HepG2 (cell line): ENCODE measurements at regions of chr12 and their contacts with region 1.

Region 1: DNA sequence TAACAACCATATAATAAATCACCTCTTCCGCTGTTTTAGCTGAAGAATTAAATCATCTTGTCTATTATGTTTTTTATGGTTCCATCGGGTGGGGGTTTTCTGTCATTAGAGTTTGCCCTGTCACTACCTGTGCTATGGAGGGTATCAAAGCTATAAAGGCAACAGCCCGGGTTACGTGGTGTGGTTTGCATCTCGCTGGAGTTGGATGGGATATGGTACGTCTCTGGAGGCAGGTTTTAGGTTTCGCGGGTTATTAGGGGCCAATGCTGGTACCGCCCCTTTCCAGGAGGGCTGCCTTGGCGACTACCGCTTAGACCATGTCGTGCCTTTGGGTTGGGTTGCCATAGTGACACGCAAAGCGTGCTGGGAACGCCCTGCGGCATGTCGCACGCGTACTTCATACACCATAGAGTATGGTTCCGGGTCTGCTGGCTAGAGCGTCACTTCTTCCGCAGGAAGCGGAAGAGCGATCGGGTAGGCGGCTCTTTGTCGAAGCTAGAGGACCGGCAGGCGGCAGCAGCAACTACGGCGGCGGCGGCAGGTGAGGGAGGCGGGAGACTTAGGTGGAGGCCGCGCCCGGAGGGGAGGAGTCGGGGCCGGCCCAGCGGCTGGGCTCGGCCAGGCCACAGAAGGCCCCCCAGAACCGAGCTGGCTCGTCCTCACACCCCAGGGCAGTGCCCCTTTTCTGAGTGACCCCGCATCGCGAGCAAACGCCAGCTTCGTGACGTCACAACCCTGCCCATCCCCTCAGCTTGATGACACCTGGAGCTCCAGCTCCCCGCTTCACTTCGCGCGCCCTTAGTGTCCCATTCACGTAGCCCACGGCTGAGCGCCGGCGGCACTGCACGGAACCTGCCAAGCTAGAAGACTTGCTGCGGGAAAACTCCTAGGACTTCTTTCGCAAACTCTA is at the start of gene ZC3H10:
- DNase-seq: peak; percentile 98
- ATAC-seq: peak; percentile 84
- H3K4me3 ChIP-seq: peak within 1 kb of the TSS; percentile 69 to 86 (median 74)
- H3K27ac ChIP-seq: peak within 1 kb of the TSS; percentile 93
- H3K4me1 ChIP-seq: peaks cover 51% of the 10 kb centered on the region
- H3K27me3 ChIP-seq: no peaks in the 10 kb centered on the region; a peak in 1 of 5 replicates
- CTCF ChIP-seq: peak; percentile 91
- EP300 ChIP-seq: peak in 1 of 2 experiments; percentile 73; a peak in 3 of 4 replicates
- POLR2A ChIP-seq: peak; percentile 99
- RAD21 ChIP-seq: peak; percentile 58
- total RNA-seq, gene ZC3H10: 1.9 and 2.3 TPM in 2 replicates

Region 2: DNA sequence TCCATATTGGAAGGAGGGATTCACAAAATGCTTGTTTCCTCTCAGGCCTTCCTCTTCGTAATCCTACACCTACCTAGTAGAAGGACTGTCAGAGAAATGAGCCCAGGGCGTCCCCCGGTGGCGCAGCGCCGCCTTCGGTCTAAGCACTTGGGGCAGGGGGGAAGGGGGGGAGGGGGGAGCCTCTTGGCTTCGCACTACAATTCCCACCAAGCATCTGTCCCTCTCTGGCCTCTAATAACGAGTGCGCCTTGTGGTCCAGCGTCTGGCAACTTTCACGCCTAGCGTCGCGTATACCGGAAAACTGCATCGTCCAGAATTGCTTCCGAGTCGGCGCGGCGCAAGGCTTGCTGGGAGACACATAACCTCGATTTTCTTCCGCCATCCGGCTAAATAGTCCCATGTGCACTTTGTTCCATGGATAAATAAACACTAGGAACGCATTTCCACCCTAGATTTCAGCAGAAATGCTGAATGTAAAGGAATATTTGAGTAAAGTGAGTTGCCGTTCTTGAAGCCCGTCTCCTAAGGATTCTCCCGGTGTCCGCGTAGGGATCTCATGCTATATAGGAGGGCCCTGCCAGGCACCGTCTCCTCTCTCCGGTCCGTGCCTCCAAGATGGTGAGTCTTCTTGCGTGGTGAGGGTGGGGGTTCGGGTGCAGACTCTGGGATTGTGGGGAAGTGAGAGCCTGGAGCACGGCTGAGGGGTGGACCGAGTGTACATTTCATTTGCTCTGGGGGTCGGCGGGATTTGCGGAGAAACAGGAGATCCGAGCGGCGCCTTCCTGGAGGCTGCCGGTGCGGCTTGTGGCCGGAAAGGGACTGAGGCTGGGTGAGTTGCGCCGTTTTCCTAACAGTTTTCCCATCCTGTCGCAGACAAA is 76.2 kb before region 1 on chr12 and contains the start of gene RPS26:
- CTCF ChIA-PET with region 1: no interaction called
- POLR2A ChIA-PET with region 1: interaction called, 6 read pairs
- in situ Hi-C with region 1: no loop called
- intact Hi-C with region 1: loop called (anchors 5 kb)
- DNase-seq: peak; percentile 99
- ATAC-seq: peak; percentile 95
- H3K4me3 ChIP-seq: peak within 1 kb of the TSS; percentile 84 to 94 (median 87)
- H3K27ac ChIP-seq: peak within 1 kb of the TSS; percentile 98
- H3K4me1 ChIP-seq: peaks cover 45% of the 10 kb centered on the region
- H3K27me3 ChIP-seq: no peaks in the 10 kb centered on the region
- CTCF ChIP-seq: peak; percentile 79
- EP300 ChIP-seq: 0 out of 4 replicates have a peak, but pooled peaks of 1 of the 2 experiments have one; percentile 10
- POLR2A ChIP-seq: peak; percentile 98 to 99
- RAD21 ChIP-seq: 0 out of 2 replicates have a peak, but pooled peaks have one; percentile 10
- total RNA-seq, gene RPS26: 421 and 486 TPM in 2 replicates

Region 3: DNA sequence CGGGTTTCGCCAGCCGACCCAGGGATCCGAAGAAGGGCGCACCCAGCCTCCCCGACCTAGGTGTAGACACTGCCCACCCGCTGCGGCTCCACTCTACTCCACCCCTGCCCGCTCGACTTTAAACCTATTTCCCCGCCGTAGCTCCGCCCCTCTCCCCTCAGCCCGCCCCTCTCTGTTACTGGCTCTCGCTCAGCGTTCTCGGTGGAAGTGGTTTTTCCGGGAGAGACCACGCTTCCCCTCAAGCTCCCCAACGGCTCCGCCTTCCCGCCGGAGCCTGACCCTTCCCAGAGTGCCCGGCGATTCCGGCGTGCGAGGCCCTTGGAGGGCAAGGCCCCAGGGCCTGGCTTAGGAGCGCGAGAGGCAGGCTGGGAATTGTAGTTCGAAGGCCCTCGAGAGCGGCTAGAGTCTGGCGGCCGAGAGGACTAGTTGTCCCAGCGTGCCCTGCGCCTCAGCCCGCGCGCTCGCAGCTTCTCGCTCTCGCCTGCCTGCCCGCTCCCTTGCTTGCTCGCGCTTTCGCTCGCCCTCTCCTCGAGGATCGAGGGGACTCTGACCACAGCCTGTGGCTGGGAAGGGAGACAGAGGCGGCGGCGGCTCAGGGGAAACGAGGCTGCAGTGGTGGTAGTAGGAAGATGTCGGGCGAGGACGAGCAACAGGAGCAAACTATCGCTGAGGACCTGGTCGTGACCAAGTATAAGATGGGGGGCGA is 13.8 kb before region 1 on chr12 and contains the start of gene PA2G4:
- CTCF ChIA-PET with region 1: no interaction called
- POLR2A ChIA-PET with region 1: interaction called, 128 read pairs
- in situ Hi-C with region 1: no loop called
- intact Hi-C with region 1: no loop called
- DNase-seq: peak; percentile 97
- ATAC-seq: peak; percentile 94
- H3K4me3 ChIP-seq: peak within 1 kb of the TSS; percentile 50 to 85 (median 74)
- H3K27ac ChIP-seq: peak within 1 kb of the TSS; percentile 76
- H3K4me1 ChIP-seq: peaks cover 35% of the 10 kb centered on the region
- H3K27me3 ChIP-seq: no peaks in the 10 kb centered on the region
- CTCF ChIP-seq: 0 out of 2 replicates have a peak, but pooled peaks have one; percentile 10
- EP300 ChIP-seq: peak in 1 of 2 experiments; percentile 21; a peak in 2 of 4 replicates
- POLR2A ChIP-seq: peak; percentile 91
- RAD21 ChIP-seq: no peak
- total RNA-seq, gene PA2G4: 240 and 281 TPM in 2 replicates

Region 4: DNA sequence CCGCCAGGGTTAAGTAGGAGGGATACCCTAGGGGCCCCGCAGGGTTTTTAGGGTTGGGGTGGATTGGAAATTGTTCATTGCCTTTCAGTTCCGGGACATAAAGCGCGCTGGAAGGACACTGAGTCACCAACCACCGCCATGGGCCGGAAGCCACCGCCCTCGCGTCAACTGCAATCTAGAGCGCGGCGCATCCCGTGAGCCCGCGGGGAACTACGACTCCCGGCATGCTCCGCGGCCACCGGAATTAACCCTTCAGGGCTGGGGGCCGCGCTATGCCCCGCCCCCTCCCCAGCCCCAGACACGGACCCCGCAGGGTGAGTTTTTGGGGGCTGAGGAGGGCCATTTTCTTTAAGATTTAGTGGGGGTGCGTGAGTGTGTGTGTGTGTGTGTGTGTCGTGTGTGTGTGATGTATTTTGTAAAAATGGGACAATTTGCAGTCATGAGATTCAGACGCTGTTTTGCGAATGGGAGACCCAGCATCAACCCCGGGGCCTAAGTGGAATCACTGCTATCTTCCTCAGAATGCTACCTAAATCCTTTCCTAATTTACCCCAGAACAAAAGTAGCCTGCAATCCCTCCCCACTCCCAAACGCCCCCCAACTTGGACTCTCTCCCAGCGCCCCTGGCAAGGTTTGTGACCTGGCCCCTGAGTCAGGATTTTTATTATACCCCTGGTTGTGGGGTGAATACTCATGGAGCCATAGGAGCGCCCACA is 34.4 kb after region 1 on chr12 and contains the start of gene MYL6B:
- CTCF ChIA-PET with region 1: no interaction called
- POLR2A ChIA-PET with region 1: interaction called, 9 read pairs
- in situ Hi-C with region 1: loop called (anchors 5 kb)
- intact Hi-C with region 1: loop called (anchors 2 kb)
- DNase-seq: peak; percentile 83
- ATAC-seq: peak; percentile 89
- H3K4me3 ChIP-seq: peak within 1 kb of the TSS; percentile 79 to 86 (median 82)
- H3K27ac ChIP-seq: peak within 1 kb of the TSS; percentile 89
- H3K4me1 ChIP-seq: peaks cover 41% of the 10 kb centered on the region
- H3K27me3 ChIP-seq: no peaks in the 10 kb centered on the region; a peak in 1 of 5 replicates
- CTCF ChIP-seq: peak; percentile 25; the same call in 1 of the 2 replicates
- EP300 ChIP-seq: peak; percentile 29 to 30; a peak in 2 of 4 replicates
- POLR2A ChIP-seq: peak; percentile 66 to 81; a peak in 2 of 4 replicates
- RAD21 ChIP-seq: no peak
- total RNA-seq, gene MYL6B: 75.7 and 76.5 TPM in 2 replicates

Region 5: DNA sequence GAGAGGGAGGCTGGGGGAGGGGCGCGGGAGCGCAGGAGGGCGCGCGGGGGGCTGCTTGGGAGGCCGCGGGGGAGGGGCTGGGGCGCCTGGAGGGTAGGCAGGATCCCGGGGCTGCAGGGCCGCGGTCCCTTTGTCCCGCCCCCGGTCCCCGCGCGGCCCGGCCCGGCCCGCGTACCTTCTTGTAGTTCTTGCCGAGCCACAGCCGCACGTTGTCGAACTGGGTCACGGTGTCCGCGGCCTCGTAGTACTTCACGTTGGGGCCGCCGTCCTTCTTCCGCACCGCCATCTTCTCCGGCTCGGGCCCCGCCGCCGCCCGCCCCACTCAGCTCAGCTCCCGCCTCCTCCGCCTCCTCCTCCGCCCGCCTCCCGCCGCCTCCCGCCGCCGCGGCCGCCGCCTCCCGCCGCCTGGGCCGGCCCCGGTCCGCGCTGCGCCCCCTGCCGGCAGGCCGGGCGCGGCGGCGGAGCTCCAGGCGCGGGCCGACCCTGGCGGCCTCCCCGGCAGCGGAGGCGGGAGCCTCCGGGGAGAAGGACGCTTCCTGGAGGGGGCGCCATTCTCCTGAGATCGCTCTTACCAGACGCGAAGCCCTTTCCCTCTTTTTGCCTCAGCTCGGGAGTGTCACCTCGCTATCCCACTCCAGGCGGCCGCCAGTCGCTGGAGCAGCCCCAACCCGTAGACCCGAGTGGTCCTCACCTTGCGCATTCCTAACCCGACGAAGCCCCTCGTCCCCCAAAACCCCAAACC is 71.3 kb after region 1 on chr12 and contains the start of gene SMARCC2:
- CTCF ChIA-PET with region 1: interaction called, 49 read pairs
- POLR2A ChIA-PET with region 1: interaction called, 26 read pairs
- in situ Hi-C with region 1: no loop called
- intact Hi-C with region 1: loop called (anchors 1 kb)
- DNase-seq: peak; percentile 73
- ATAC-seq: peak; percentile 86
- H3K4me3 ChIP-seq: peak within 1 kb of the TSS; percentile 76 to 94 (median 93)
- H3K27ac ChIP-seq: peak within 1 kb of the TSS; percentile 74
- H3K4me1 ChIP-seq: peaks cover 34% of the 10 kb centered on the region
- H3K27me3 ChIP-seq: no peaks in the 10 kb centered on the region; a peak in 1 of 5 replicates
- CTCF ChIP-seq: peak; percentile 81
- EP300 ChIP-seq: no peak
- POLR2A ChIP-seq: peak; percentile 29 to 46; a peak in 2 of 4 replicates
- RAD21 ChIP-seq: peak; percentile 62
- total RNA-seq, gene SMARCC2: 13.1 and 21.3 TPM in 2 replicates

Region 6: GRCh38 chr12:56468216-56469006 is 350.4 kb after region 1 on chr12 and contains the start of gene SPRYD4:
- CTCF ChIA-PET with region 1: no interaction called
- POLR2A ChIA-PET with region 1: no interaction called
- in situ Hi-C with region 1: no loop called
- intact Hi-C with region 1: loop called (anchors 5 kb)
- DNase-seq: peak; percentile 82
- ATAC-seq: peak; percentile 92
- H3K4me3 ChIP-seq: peak within 1 kb of the TSS; percentile 79 to 93 (median 80)
- H3K27ac ChIP-seq: peak within 1 kb of the TSS; percentile 86
- H3K4me1 ChIP-seq: peaks cover 23% of the 10 kb centered on the region
- H3K27me3 ChIP-seq: no peaks in the 10 kb centered on the region; a peak in 1 of 5 replicates
- CTCF ChIP-seq: peak; percentile 90
- EP300 ChIP-seq: 0 out of 4 replicates have a peak, but pooled peaks of 1 of the 2 experiments have one; percentile 9
- POLR2A ChIP-seq: peak; percentile 90
- RAD21 ChIP-seq: peak; percentile 54; the same call in 1 of the 2 replicates
- total RNA-seq, gene SPRYD4: 4.1 and 4.5 TPM in 2 replicates